Gastrocnemius medialis (tissue), 4 donors: ENCODE measurements at regions of chr3 and their contacts with region 1.

Region 1: DNA sequence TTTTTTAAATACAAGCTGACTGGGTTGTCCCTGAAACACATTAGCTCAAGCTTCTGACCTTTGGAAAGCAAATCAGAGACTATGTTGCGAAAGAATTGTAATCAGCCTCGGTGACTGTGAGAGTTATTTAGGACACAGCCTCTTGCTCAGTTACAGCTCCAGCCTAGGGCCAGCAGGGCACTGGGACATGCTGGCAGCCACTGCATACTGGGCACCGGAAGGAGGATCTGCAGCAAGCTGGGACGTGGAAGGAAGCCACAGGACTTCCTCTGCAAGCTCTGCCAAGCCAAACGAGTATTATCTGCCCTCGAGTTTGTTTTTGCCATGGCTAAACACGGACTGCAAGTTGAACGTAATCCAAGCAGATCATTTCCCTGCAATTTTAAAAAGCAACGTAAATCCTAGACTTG is 24.4 kb upstream of the COPG1 start:
- DNase-seq: peak; percentile 96 to 99
- ATAC-seq: peak; percentile 82 to 87
- H3K4me3 ChIP-seq: peak overlapping the region; percentile 1 to 14 (median 5)
- H3K27ac ChIP-seq: peak overlapping the region; percentile 84 to 97 (median 94)
- H3K4me1 ChIP-seq: peaks cover 48 to 52% of the 10 kb centered on the region in 2 donors
- H3K27me3 ChIP-seq: no peaks in the 10 kb centered on the region
- CTCF ChIP-seq: peak in 1 of 5 experiments; percentile 23
- POLR2A ChIP-seq: peak; percentile 35 to 56

Region 2: GRCh38 chr3:128804017-128804810 is 420.8 kb before region 1 on chr3:
- in situ Hi-C with region 1: no loop called
- intact Hi-C with region 1: loop called (anchors 5 kb)
- DNase-seq: no peak
- ATAC-seq: peak; percentile 16 to 48
- H3K4me3 ChIP-seq: peak overlapping the region; percentile 11 to 38 (median 36)
- H3K27ac ChIP-seq: peak overlapping the region; percentile 94 to 99 (median 96)
- H3K4me1 ChIP-seq: peaks cover 90 to 96% of the 10 kb centered on the region in 2 donors
- H3K27me3 ChIP-seq: no peaks in the 10 kb centered on the region
- CTCF ChIP-seq: no peak
- POLR2A ChIP-seq: no peak

Region 3: DNA sequence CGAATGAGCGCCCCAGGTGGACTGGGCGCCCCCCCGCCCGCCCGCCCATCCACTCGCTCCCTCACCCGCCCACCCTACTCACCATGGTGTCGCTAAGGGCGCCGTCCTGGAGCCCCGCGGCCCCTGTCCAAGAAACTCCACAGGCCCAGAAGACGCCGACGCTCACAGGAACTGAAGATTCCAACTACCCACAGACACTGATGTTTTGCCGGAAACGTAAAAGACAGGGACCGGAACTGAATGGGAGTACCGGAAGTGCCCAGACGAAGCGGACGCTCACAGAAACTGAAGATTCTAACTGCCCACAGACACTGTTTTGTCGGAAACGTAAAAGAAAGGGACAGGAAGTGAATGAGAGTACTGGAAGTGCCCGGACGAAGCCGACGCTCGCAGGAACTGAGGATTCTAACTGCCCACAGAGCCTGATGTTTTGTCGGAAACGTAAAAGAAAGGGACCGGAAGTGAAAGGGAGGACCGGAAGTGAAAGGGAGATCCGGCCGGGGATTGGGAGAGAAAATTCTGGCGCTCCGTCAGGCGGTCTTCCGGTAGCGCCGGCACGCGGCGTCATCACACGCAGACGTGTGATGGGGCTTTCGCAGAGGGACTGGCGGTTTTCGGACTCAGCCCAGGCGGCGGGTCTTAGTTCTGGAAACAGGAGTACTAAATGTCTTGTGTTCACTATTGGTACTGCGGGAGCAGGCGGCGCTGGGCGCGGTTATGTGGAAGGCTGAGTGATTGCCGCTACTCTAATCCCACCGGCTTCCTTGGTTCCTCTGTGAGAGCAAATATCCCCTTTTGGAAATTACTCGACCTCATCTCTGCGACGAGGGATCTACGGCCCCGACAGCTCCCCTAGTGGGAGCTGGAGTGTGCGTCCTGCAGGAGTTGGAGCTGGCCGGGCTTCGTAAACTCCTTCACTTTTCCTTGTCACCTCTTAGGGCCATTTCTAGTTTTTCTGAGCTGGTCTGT is 63.8 kb before region 1 on chr3 and contains the start of gene ISY1:
- in situ Hi-C with region 1: no loop called
- intact Hi-C with region 1: loop called (anchors 1 kb)
- DNase-seq: peak; percentile 83 to 87
- ATAC-seq: peak; percentile 82 to 86
- H3K4me3 ChIP-seq: peak within 1 kb of the TSS; percentile 76 to 97 (median 84)
- H3K27ac ChIP-seq: peak within 1 kb of the TSS; percentile 93 to 97 (median 96)
- H3K4me1 ChIP-seq: peaks cover 26 to 36% of the 10 kb centered on the region in 2 donors
- H3K27me3 ChIP-seq: no peaks in the 10 kb centered on the region
- CTCF ChIP-seq: peak; percentile 80 to 94 (median 82)
- POLR2A ChIP-seq: peak; percentile 87 to 88
- total RNA-seq, gene ISY1: 19.6 to 34.9 (median 22.3) TPM

Region 4: GRCh38 chr3:129183569-129184395 is 41.2 kb before region 1 on chr3 and contains the start of gene CNBP:
- in situ Hi-C with region 1: no loop called
- intact Hi-C with region 1: loop called (anchors 1 kb)
- DNase-seq: peak; percentile 92 to 94
- ATAC-seq: peak; percentile 64 to 68
- H3K4me3 ChIP-seq: peak within 1 kb of the TSS; percentile 85 to 97 (median 95)
- H3K27ac ChIP-seq: peak within 1 kb of the TSS; percentile 96 to 100 (median 100)
- H3K4me1 ChIP-seq: peaks cover 44 to 52% of the 10 kb centered on the region in 2 donors
- H3K27me3 ChIP-seq: no peaks in the 10 kb centered on the region
- CTCF ChIP-seq: no peak
- POLR2A ChIP-seq: peak; percentile 99 to 100
- total RNA-seq, gene CNBP: 784 to 1,263 (median 979) TPM

Region 5: GRCh38 chr3:129195731-129196256 is 29.2 kb before region 1 on chr3:
- in situ Hi-C with region 1: no loop called
- intact Hi-C with region 1: loop called (anchors 2 kb)
- DNase-seq: peak; percentile 79 to 86
- ATAC-seq: peak; percentile 93 to 95
- H3K4me3 ChIP-seq: peak overlapping the region in 2 of 4 donors; percentile 6 to 26
- H3K27ac ChIP-seq: peak overlapping the region; percentile 86 to 90 (median 88)
- H3K4me1 ChIP-seq: peaks cover 35 to 62% of the 10 kb centered on the region in 2 donors
- H3K27me3 ChIP-seq: no peaks in the 10 kb centered on the region
- CTCF ChIP-seq: peak in 1 of 5 experiments; percentile 1
- POLR2A ChIP-seq: no peak

Region 6: GRCh38 chr3:129278439-129278970 is 53.5 kb after region 1 on chr3 and contains the start of gene HMCES:
- in situ Hi-C with region 1: no loop called
- intact Hi-C with region 1: no loop called
- DNase-seq: peak; percentile 88 to 90
- ATAC-seq: peak; percentile 92 to 95
- H3K4me3 ChIP-seq: peak within 1 kb of the TSS; percentile 69 to 91 (median 86)
- H3K27ac ChIP-seq: peak within 1 kb of the TSS; percentile 87 to 94 (median 89)
- H3K4me1 ChIP-seq: peaks cover 19 to 21% of the 10 kb centered on the region in 2 donors
- H3K27me3 ChIP-seq: no peaks in the 10 kb centered on the region
- CTCF ChIP-seq: no peak
- POLR2A ChIP-seq: peak in 1 of 2 donors; percentile 83
- total RNA-seq, gene HMCES: 24.7 to 35.2 (median 29.5) TPM